Activated B cell treated with CpG ODN at 0.5 μM for 24 hours (primary cell): ENCODE measurements at regions of chr15 and their contacts with region 1.

Region 1: DNA sequence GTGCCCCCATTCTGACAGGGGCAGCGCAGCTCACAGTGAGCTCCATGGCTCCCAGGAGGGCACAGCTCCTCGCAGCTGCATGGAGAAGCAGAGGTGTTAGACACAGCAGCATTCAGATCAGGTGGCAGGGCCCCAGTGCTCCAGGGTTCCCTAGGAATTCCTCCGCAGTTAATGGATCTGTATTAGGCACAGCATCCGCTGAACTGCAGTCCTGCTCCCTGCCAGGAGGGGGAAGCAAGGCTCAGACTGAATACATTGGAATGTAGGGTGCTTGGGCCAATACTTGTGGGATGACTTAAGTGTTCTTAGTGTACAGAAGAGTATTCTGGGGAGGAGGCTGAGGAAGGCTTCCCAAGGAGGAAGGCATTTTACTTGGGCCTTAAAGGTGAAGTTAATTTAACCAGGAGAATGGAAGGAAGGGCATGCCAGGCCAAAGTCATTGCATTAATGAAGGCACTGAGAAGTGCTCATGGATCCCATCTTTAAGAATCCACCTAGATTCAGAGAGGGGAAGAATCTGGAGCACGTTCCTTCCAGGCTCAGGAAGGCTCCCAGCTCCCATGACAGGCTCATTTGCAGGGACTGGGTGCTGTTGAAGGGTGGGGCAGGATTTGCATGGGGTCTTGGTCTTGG is 111.6 kb downstream of the RAB11A start:
- DNase-seq: no peak
- ATAC-seq: no peak
- H3K4me3 Mint-ChIP-seq: no peak overlapping the region
- H3K27ac Mint-ChIP-seq: no peak overlapping the region
- H3K4me1 Mint-ChIP-seq: peaks cover 19% of the 10 kb centered on the region
- H3K27me3 Mint-ChIP-seq: peaks cover 26% of the 10 kb centered on the region
- CTCF ChIP-seq: no peak

Region 2: DNA sequence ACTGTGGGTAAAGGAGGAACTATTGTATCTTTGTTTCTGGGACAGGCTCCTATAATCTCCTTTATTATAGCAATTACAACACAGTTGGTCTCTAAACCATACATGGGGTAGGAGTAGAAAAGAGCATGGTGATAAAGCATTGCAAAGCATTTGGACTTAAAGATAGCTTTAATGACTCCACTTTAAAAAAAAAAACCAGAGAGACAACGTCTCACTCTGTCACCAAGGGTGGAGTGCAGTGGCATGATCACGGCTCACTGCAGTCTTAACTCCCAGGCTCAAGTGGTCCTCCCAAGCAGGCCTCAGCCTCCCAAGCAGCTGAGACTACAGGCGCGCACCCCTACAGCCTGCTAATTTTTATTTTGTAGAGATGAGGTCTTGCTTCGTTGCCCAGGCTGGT is 257.1 kb before region 1 on chr15:
- CTCF ChIA-PET with region 1: no interaction called
- POLR2A ChIA-PET with region 1: no interaction called
- intact Hi-C with region 1: loop called (anchors 10 kb)
- DNase-seq: no peak
- ATAC-seq: no peak
- H3K4me3 Mint-ChIP-seq: no peak overlapping the region
- H3K27ac Mint-ChIP-seq: no peak overlapping the region
- H3K4me1 Mint-ChIP-seq: no peaks in the 10 kb centered on the region
- H3K27me3 Mint-ChIP-seq: no peaks in the 10 kb centered on the region
- CTCF ChIP-seq: no peak

Region 3: GRCh38 chr15:65902378-65902777 is 78.6 kb before region 1 on chr15:
- CTCF ChIA-PET with region 1: interaction called, 3 read pairs
- POLR2A ChIA-PET with region 1: no interaction called
- intact Hi-C with region 1: loop called (anchors 5 kb)
- DNase-seq: peak; percentile 46
- ATAC-seq: peak; percentile 99
- H3K4me3 Mint-ChIP-seq: peak overlapping the region; percentile 17
- H3K27ac Mint-ChIP-seq: peak overlapping the region; percentile 61
- H3K4me1 Mint-ChIP-seq: peaks cover 43% of the 10 kb centered on the region
- H3K27me3 Mint-ChIP-seq: no peaks in the 10 kb centered on the region
- CTCF ChIP-seq: no peak

Region 4: GRCh38 chr15:65916664-65917406 is 64.1 kb before region 1 on chr15:
- CTCF ChIA-PET with region 1: interaction called, 5 read pairs
- POLR2A ChIA-PET with region 1: no interaction called
- intact Hi-C with region 1: loop called (anchors 2 kb)
- DNase-seq: peak; percentile 64
- ATAC-seq: peak; percentile 91
- H3K4me3 Mint-ChIP-seq: peak overlapping the region; percentile 69
- H3K27ac Mint-ChIP-seq: peak overlapping the region; percentile 64
- H3K4me1 Mint-ChIP-seq: peaks cover 72% of the 10 kb centered on the region
- H3K27me3 Mint-ChIP-seq: no peaks in the 10 kb centered on the region
- CTCF ChIP-seq: no peak